ENCODE measurements at regions of chr22 and their contacts with region 1.

Region 1: GRCh38 chr22:23047265-23047664 is 23.1 kb upstream of the GNAZ start:
- DNase-seq: no peak
- ATAC-seq: peak; percentile 48
- H3K4me3 ChIP-seq: no peak overlapping the region
- H3K27ac ChIP-seq: no peak overlapping the region
- H3K4me1 ChIP-seq: no peaks in the 10 kb centered on the region
- H3K27me3 ChIP-seq: peaks cover 0 to 6% of the 10 kb centered on the region in 2 experiments; a peak in 1 of 5 replicates
- CTCF ChIP-seq: no peak
- EP300 ChIP-seq: no peak
- POLR2A ChIP-seq: no peak
- RAD21 ChIP-seq: no peak

Region 2: DNA sequence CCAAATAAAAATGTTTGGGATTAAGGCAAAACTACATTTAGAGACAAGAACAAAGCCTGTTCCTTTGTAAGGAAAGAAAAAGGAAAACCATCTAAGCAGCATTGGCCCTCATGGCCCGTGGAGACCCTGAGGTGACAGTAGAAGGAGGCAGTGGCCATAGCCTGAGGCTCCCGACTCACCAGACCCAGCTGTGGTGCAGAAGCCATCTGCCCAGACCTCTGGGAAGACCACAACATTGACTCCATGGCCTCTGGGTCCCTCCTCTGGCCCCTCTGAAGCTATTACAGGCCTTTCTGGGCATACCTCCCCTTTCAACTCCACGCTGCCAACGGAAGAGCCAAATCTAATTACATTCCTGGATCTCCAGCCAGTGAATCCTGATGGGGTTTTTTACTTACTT is 494.6 kb before region 1 on chr22:
- CTCF ChIA-PET with region 1: no interaction called
- POLR2A ChIA-PET with region 1: no interaction called
- in situ Hi-C with region 1: no loop called
- intact Hi-C with region 1: no loop called
- DNase-seq: peak; percentile 84 to 87 (median 86)
- ATAC-seq: peak; percentile 21
- H3K4me3 ChIP-seq: no peak overlapping the region
- H3K27ac ChIP-seq: peak overlapping the region; percentile 2; the same call in 2 of the 3 replicates
- H3K4me1 ChIP-seq: peaks cover 52 to 63% of the 10 kb centered on the region in 2 experiments
- H3K27me3 ChIP-seq: no peaks in the 10 kb centered on the region
- CTCF ChIP-seq: no peak
- EP300 ChIP-seq: no peak
- POLR2A ChIP-seq: no peak
- RAD21 ChIP-seq: no peak

Region 3: DNA sequence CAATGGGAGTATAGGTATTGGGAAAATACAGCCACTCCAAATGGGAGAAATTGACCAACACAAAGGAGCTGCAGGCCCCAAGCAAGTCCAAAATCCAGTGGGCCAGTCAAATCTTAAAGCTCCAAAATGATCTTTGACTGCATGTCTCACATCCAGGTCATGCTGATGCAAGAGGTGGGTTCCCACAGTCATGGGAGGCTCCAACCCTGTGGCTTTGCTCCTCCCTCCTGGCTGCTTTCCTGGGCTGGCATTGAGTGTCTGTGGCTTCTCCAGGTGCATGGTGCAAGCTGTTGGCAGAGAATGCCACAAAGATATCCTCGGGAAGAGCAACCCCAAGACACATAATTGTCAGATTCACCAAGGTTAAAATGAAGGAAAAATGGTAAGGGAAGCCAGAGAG is 78.9 kb before region 1 on chr22:
- CTCF ChIA-PET with region 1: no interaction called
- POLR2A ChIA-PET with region 1: no interaction called
- in situ Hi-C with region 1: no loop called
- intact Hi-C with region 1: no loop called
- DNase-seq: no peak
- ATAC-seq: peak; percentile 67
- H3K4me3 ChIP-seq: no peak overlapping the region
- H3K27ac ChIP-seq: no peak overlapping the region
- H3K4me1 ChIP-seq: no peaks in the 10 kb centered on the region
- H3K27me3 ChIP-seq: no peaks in the 10 kb centered on the region
- CTCF ChIP-seq: no peak
- EP300 ChIP-seq: no peak
- POLR2A ChIP-seq: no peak
- RAD21 ChIP-seq: no peak

Region 4: DNA sequence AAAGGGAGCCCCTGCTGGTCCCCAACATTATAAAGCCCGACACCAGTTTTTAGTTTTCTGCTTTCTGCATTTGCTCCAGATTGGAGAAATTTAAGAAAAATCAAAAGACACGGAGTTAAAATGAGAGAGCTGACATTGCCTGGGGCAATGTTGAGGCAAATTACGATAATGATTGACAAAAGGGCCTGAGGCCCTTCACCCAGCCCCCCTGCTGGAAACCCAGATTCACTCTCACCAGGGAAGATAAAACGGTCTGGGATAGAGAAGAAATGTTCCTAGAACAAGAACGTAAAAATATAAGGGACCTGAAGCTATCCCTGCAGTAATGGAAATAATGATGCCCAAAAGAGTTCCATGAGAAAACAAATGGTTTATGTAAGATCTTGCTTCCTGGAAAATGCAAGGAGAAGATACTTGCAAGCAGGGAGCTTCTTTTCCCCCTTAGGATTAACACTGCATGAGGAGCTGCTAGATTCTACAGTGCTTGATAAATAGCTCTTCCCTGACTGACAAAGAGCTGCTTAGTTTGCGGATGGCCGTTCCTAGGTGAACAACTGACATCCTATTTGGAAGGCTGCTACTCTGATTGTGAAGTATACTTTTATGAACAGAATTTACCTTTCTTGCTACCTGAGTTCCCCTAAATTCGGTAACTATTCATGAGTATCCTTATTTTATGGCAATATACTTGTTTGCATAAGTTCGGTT is 17.6 kb before region 1 on chr22:
- CTCF ChIA-PET with region 1: no interaction called
- POLR2A ChIA-PET with region 1: interaction called, 42 read pairs
- in situ Hi-C with region 1: no loop called
- intact Hi-C with region 1: no loop called
- DNase-seq: peak in 2 of 4 experiments; percentile 44 to 59
- ATAC-seq: no peak
- H3K4me3 ChIP-seq: no peak overlapping the region
- H3K27ac ChIP-seq: no peak overlapping the region
- H3K4me1 ChIP-seq: peaks cover 0 to 4% of the 10 kb centered on the region in 2 experiments; a peak in 2 of 5 replicates
- H3K27me3 ChIP-seq: peaks cover 38 to 41% of the 10 kb centered on the region in 2 experiments
- CTCF ChIP-seq: peak in 1 of 3 experiments; percentile 32; a peak in 2 of 6 replicates
- EP300 ChIP-seq: no peak
- POLR2A ChIP-seq: no peak
- RAD21 ChIP-seq: no peak

Region 5: DNA sequence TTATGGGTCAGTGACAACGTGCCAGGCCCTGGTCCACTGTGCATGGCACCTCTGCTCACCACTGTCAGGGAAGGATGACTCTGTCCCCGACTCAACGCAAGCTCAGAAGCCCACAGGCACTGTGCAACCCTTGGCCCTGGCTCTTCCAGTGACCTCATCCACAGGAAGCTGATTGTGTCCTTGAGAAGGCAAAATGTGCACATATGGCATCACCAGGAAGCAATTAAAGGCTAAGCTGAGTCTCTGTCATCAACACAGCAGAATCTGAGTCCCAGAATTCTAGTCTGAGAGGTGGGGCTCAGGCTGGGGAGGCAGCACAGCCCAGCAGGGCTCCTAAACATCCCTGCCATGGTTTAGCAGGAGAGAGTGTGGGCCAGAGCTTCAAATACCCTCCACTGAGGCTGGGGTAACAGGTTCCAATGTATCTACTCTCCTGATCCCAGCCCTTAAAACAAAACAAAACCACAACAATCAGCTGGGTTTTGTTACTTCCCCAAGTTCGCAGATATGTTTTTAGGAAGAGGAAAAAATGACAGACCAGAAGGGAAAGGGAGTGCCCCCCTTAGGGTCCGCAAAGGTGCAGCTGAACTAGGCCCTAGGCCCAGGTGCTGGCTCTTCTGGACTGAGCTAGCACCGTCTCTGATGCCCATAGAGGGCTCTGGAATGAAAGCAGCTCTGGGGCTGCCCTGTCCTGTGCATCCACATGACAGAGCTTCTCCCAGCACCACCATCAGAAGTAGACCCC is 10.4 kb before region 1 on chr22:
- CTCF ChIA-PET with region 1: no interaction called
- POLR2A ChIA-PET with region 1: interaction called, 42 read pairs
- in situ Hi-C with region 1: no loop called
- intact Hi-C with region 1: loop called (anchors 1 kb)
- DNase-seq: peak in 3 of 4 experiments; percentile 52 to 55 (median 54)
- ATAC-seq: peak; percentile 18
- H3K4me3 ChIP-seq: no peak overlapping the region
- H3K27ac ChIP-seq: no peak overlapping the region
- H3K4me1 ChIP-seq: peaks cover 2 to 5% of the 10 kb centered on the region in 2 experiments; a peak in 1 of 5 replicates
- H3K27me3 ChIP-seq: peaks cover 18 to 54% of the 10 kb centered on the region in 2 experiments; a peak in 4 of 5 replicates
- CTCF ChIP-seq: no peak
- EP300 ChIP-seq: no peak
- POLR2A ChIP-seq: no peak
- RAD21 ChIP-seq: no peak

Region 6: DNA sequence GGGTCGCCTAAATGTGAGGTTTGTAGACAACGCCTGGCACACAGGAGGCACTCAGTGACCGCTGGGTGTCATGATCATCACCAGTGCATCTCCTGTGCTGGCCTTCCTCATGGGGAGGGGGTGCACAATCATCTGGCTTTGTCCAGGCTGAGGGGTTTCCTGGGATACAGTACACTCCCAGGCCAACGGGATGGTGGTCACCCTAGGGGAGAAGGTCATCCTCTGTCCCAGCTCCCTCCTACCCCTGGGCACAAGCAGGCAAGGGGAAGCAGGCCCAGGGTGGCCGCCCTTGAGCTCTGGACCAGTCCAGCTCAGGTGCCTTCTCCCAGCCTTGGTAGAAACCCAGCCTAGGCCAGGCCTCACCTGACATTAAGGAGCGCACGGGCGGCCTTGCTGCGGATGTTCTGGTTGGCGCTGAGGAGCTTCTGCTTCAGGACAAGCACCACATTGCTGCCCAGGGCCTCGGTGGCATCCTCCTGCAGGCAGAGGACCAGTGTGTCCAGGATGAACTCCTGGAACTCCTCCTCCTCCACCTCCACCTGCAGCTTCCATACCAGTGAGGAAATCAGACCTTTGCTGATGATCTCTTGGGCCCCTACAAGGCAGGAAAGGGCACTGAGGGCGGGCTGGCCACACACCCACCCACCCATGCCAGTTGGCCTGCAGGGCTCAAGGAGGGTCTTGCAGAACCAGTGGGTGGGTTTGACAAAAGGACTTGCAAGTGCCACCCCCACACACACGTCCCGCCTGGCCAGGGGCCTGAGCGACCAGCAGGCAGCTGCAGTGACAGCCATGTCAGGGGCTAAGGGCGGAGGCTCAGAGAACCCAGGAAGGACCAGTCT is 16.5 kb after region 1 on chr22:
- CTCF ChIA-PET with region 1: no interaction called
- POLR2A ChIA-PET with region 1: interaction called, 18 read pairs
- in situ Hi-C with region 1: no loop called
- intact Hi-C with region 1: no loop called
- DNase-seq: peak in 1 of 4 experiments; percentile 47
- ATAC-seq: no peak
- H3K4me3 ChIP-seq: no peak overlapping the region
- H3K27ac ChIP-seq: no peak overlapping the region
- H3K4me1 ChIP-seq: peaks cover 0 to 7% of the 10 kb centered on the region in 2 experiments; a peak in 1 of 5 replicates
- H3K27me3 ChIP-seq: peaks cover 55 to 100% of the 10 kb centered on the region in 2 experiments
- CTCF ChIP-seq: no peak; a peak in 1 of 6 replicates
- EP300 ChIP-seq: no peak
- POLR2A ChIP-seq: no peak
- RAD21 ChIP-seq: no peak; a peak in 2 of 4 replicates

Region 7: DNA sequence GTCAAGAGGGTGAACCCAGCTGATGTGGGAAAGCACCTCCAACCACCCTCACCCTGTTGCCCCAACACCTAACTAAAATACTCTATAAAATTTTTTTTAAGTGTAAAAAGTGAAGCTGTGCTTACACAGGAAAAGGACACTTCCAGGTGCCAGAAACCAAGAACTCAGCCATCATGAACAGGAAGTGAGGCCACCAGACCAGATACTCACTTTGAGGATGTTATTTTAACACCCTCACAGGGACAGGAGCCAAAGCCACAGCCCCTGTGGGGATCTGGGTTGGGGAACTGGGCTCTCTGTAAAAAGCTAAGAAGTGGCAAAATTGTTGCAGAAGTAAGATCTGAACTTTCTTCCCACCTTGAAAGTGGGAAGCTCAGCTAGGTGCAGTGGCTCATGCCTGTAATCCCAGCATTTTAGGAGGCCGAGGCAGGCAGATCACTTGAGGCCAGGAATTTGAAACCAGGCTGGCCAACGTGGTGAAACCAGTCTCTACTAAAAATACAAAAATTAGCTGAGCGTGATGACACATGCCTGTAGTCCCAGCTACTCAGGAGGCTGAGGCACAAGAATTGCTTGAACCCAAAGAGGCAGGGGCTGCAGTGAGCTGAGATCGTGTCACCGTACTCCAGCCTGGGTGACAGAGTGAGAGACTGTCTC is 90.8 kb after region 1 on chr22:
- CTCF ChIA-PET with region 1: no interaction called
- POLR2A ChIA-PET with region 1: no interaction called
- in situ Hi-C with region 1: no loop called
- intact Hi-C with region 1: no loop called
- DNase-seq: peak in 1 of 4 experiments; percentile 71
- ATAC-seq: no peak
- H3K4me3 ChIP-seq: no peak overlapping the region
- H3K27ac ChIP-seq: no peak overlapping the region
- H3K4me1 ChIP-seq: peaks cover 11 to 14% of the 10 kb centered on the region in 2 experiments
- H3K27me3 ChIP-seq: peaks cover 33 to 38% of the 10 kb centered on the region in 2 experiments
- CTCF ChIP-seq: no peak
- EP300 ChIP-seq: no peak
- POLR2A ChIP-seq: no peak
- RAD21 ChIP-seq: no peak

Measured in K562 (cell line).